ENCODE measurements at regions of chr10 and their contacts with region 1.

Region 1: DNA sequence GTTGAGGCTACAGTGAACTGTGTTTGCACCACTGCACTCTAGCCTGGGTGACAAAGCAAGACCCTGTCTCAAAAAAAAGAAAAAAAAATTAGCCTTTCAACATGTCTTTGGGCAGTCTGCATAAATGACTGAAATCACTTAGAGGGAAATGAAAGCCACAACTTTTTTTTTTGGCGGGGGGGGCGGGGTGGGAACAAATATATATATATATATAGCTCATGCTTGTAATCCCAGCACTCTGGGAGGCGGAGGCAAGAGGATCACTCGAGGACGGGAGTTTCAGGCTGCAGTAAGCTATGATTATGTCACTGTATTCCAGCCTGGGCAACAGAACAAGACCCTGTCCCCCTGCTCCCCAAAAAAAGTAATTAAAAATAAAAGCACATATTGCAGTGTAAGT is 23.4 kb upstream of the MICU1 start:
- DNase-seq: no peak
- H3K4me3 ChIP-seq: no peak overlapping the region
- H3K27ac ChIP-seq: no peak overlapping the region
- H3K27me3 ChIP-seq: no peaks in the 10 kb centered on the region
- CTCF ChIP-seq: no peak

Region 2: GRCh38 chr10:71684356-71685173 is 964.7 kb before region 1 on chr10:
- intact Hi-C with region 1: loop called in 1 of 2 experiments (anchors 10 kb)
- DNase-seq: no peak
- H3K4me3 ChIP-seq: no peak overlapping the region
- H3K27ac ChIP-seq: no peak overlapping the region
- H3K27me3 ChIP-seq: no peaks in the 10 kb centered on the region
- CTCF ChIP-seq: no peak

Region 3: DNA sequence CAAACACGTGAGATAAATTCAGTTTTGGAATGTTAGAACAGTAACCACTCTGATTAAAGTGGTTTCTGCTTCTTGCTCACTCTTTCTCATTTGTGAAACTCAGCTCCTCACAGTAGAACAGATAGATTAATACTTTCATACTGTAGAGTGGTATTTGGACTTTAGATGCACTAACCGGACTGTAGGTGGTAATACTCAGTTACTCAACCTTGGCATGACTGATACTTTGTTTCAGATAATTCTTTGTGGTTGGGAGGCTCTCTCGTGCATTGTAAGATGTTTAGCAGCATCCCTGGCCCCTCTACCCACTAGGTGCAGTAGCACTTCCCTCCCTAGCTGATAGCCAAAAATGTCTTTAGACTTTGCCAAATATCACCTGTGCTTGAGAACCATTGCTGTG is 80.2 kb after region 1 on chr10:
- intact Hi-C with region 1: no loop called
- DNase-seq: no peak
- H3K4me3 ChIP-seq: no peak overlapping the region
- H3K27ac ChIP-seq: no peak overlapping the region
- H3K27me3 ChIP-seq: no peaks in the 10 kb centered on the region
- CTCF ChIP-seq: no peak